Panc1 (cell line): ENCODE measurements at regions of chr19 and their contacts with region 1.

Region 1: GRCh38 chr19:41192574-41193429 is at the start of gene CYP2S1:
- DNase-seq: no peak
- ATAC-seq: peak; percentile 89
- H3K4me3 ChIP-seq: peak within 1 kb of the TSS; percentile 55 to 68
- H3K27ac ChIP-seq: peak within 1 kb of the TSS; percentile 39
- H3K4me1 ChIP-seq: no peaks in the 10 kb centered on the region; the same call in none of the 2 replicates
- H3K27me3 ChIP-seq: no peaks in the 10 kb centered on the region
- CTCF ChIP-seq: no peak
- total RNA-seq, gene CYP2S1: 8.5 TPM

Region 2: DNA sequence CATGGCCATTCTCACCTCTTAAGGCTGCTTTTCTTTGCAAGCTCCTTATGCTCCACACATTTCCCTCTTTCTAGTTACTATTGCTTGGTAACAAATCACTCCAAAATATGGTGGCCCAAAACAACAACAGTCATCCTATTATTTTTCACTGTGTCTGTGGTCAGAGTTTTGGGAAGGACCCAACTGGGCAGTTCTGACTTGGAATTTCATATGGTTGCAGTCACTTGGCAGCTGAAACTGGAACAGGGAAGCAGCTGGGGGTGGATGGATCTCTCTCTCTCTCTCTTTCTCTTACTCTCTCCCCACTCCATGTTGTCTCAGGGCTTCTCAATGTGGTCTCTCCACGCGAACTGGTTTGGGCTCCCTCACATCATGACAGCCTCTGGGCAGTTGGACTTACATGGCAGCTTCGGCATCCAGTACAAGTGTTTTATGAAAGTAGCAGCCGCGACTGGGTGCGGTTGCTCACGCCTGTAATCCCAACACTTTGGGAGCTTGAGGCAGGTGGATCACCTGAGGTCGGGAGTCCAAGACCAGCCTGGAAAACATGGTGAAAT is 542.0 kb before region 1 on chr19:
- CTCF ChIA-PET with region 1: no interaction called
- POLR2A ChIA-PET with region 1: interaction called, 20 read pairs
- in situ Hi-C with region 1: no loop called
- intact Hi-C with region 1: no loop called
- DNase-seq: no peak
- ATAC-seq: no peak
- H3K4me3 ChIP-seq: no peak overlapping the region
- H3K27ac ChIP-seq: no peak overlapping the region
- H3K4me1 ChIP-seq: peaks cover 2% of the 10 kb centered on the region; the same call in 1 of the 2 replicates
- H3K27me3 ChIP-seq: no peaks in the 10 kb centered on the region
- CTCF ChIP-seq: no peak